ENCODE measurements at regions of chr5 and their contacts with region 1.

Region 1: GRCh38 chr5:73591102-73591695 is 25.7 kb downstream of the UTP15 start:
- DNase-seq: peak in 2 of 5 donors; percentile 41 to 54
- ATAC-seq: peak in 3 of 4 donors; percentile 59 to 75 (median 66)
- H3K4me3 ChIP-seq: no peak overlapping the region
- H3K27ac ChIP-seq: no peak overlapping the region
- H3K4me1 ChIP-seq: no peaks in the 10 kb centered on the region
- H3K27me3 ChIP-seq: no peaks in the 10 kb centered on the region
- CTCF ChIP-seq: peak; percentile 80 to 93 (median 87)
- POLR2A ChIP-seq: no peak

Region 2: DNA sequence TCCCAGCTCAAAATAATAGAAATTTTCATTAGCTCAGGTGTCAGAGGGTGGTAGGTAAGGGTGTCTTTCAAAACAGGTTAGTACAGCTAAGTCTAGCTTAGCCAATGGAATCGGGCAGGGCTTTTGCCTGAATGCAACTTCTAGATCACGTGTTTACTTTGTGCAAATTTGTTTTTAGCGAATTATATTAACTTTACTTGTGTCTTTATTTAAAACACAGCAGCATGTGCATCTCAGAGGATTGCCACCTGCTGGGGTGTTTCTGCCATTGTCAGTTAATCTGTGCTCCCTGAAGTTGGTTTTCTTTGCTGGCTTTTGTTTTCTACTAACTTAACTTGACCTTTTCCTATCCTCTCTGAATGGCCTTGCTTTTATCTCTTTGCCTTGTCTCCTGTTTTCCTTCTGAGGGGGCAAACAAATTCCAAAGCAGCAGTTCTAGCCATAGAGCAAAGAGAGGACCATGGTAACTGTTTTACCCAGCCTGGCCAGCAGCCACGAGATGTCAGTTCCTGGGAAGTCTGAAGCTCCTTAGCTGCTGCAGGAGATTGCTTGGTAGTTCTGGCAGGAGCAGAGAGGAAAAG is 102.4 kb after region 1 on chr5:
- intact Hi-C with region 1: loop called in 1 of 10 experiments (anchors 5 kb)
- DNase-seq: no peak
- ATAC-seq: no peak
- H3K4me3 ChIP-seq: no peak overlapping the region
- H3K27ac ChIP-seq: peak overlapping the region in 2 of 12 donors; percentile 9 to 42
- H3K4me1 ChIP-seq: peaks cover 0 to 28% (median 2%) of the 10 kb centered on the region in 12 donors
- H3K27me3 ChIP-seq: no peaks in the 10 kb centered on the region
- CTCF ChIP-seq: peak in 8 of 12 donors; percentile 10 to 55 (median 26)
- POLR2A ChIP-seq: no peak

Region 3: DNA sequence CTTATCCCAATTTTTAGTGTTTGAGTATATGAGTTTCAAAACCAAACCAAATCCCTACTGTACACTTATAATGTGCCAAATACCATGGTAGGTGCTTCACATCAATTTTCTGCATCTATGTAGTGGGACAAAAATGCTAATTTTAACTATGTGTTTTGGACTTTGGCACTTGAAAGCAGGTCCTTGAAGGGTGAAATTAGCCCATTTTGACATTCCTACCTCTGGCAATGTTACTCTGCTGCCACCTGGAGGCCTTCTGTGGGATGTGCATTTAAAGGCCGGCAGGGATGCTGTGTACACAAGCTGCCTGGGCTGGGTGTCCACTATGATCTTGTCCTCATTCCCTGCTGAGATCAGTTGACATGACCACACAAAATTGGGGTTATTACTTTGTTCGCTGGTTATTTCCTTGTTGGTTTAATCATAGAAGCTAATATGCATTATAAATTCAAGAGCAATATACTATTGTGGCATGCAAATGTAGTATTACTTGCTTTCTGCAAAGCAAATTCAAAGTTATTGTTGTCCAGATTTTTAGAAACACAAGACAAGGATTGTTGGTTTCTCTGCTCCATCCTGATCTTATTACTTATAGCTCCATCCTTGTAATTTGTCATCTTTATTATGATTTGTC is 201.6 kb after region 1 on chr5:
- intact Hi-C with region 1: loop called (anchors 1 to 2 kb)
- DNase-seq: peak; percentile 48 to 71 (median 62)
- ATAC-seq: peak in 3 of 4 donors; percentile 78 to 89 (median 79)
- H3K4me3 ChIP-seq: no peak overlapping the region
- H3K27ac ChIP-seq: no peak overlapping the region
- H3K4me1 ChIP-seq: peaks cover 0 to 28% (median 11%) of the 10 kb centered on the region in 12 donors
- H3K27me3 ChIP-seq: no peaks in the 10 kb centered on the region
- CTCF ChIP-seq: peak; percentile 91 to 100 (median 97)
- POLR2A ChIP-seq: no peak

Region 4: GRCh38 chr5:74648835-74649293 is 1057.7 kb after region 1 on chr5:
- intact Hi-C with region 1: loop called in 8 of 10 experiments (anchors 5 to 10 kb)
- DNase-seq: peak in 1 of 5 donors; percentile 35
- ATAC-seq: peak; percentile 67 to 95 (median 88)
- H3K4me3 ChIP-seq: peak overlapping the region in 2 of 12 donors; percentile 10 to 12
- H3K27ac ChIP-seq: no peak overlapping the region
- H3K4me1 ChIP-seq: peaks cover 0 to 16% (median 5%) of the 10 kb centered on the region in 12 donors
- H3K27me3 ChIP-seq: no peaks in the 10 kb centered on the region
- CTCF ChIP-seq: peak; percentile 58 to 84 (median 78)
- POLR2A ChIP-seq: no peak